IMR-90 (cell line): ENCODE measurements at regions of chr2 and their contacts with region 1.

Region 1: DNA sequence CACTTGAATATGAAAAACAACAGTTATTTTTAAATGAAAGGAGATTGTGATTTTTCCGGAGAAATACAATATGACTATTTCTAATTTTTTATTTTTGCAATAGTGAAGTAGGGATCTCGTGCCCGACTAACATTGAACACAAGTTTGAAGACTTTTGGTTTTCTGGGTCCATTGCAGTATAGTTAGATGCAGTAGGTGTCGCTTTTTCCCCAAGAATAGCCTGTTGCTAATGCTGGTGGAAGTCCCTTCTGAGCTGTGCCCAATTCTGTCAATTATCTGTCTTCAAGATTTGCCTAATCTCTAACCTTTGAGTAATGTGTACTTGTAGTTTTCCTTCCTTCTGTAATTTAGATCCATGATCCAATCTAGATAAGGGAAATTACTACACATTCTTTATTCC is 36.5 kb downstream of the SEMA4F start:
- DNase-seq: peak; percentile 71
- ATAC-seq: peak; percentile 93
- H3K4me3 ChIP-seq: no peak overlapping the region
- H3K27ac ChIP-seq: no peak overlapping the region
- H3K4me1 ChIP-seq: peaks cover 9% of the 10 kb centered on the region; the same call in 1 of the 2 replicates
- H3K27me3 ChIP-seq: peaks cover 4% of the 10 kb centered on the region; the same call in 1 of the 2 replicates
- CTCF ChIP-seq: peak; percentile 91
- POLR2A ChIP-seq: no peak
- RAD21 ChIP-seq: peak; percentile 98

Region 2: GRCh38 chr2:74876081-74876886 is 185.7 kb after region 1 on chr2:
- CTCF ChIA-PET with region 1: interaction called, 9 read pairs
- POLR2A ChIA-PET with region 1: no interaction called
- dilution Hi-C with region 1: no loop called
- in situ Hi-C with region 1: no loop called
- intact Hi-C with region 1: loop called (anchors 1 kb)
- DNase-seq: peak; percentile 46
- ATAC-seq: peak; percentile 78
- H3K4me3 ChIP-seq: no peak overlapping the region
- H3K27ac ChIP-seq: peak overlapping the region; percentile 19; the same call in 1 of the 2 replicates
- H3K4me1 ChIP-seq: peaks cover 16% of the 10 kb centered on the region
- H3K27me3 ChIP-seq: no peaks in the 10 kb centered on the region
- CTCF ChIP-seq: peak; percentile 73
- POLR2A ChIP-seq: no peak
- RAD21 ChIP-seq: peak; percentile 73

Region 3: DNA sequence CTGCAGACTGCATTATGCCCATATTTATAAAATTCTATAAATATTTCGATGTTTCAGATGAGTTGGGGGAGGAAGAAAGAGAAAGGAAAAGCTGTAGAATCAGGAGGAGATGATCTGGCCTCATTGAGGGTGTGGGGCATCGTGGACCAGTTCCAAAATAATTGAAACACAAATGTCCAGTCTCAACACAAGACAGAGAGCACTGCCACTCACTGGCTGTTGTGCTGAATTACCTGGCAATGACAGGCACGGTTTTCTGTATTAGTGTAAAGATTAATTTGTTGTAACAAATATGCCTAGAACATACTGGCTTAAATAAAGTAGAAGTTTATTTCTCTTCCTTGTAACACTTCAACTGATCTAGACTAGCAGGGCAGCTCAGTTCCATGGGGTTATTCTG is 292.0 kb after region 1 on chr2:
- CTCF ChIA-PET with region 1: no interaction called
- POLR2A ChIA-PET with region 1: no interaction called
- dilution Hi-C with region 1: no loop called
- in situ Hi-C with region 1: no loop called
- intact Hi-C with region 1: no loop called
- DNase-seq: no peak
- ATAC-seq: no peak
- H3K4me3 ChIP-seq: no peak overlapping the region
- H3K27ac ChIP-seq: no peak overlapping the region
- H3K4me1 ChIP-seq: no peaks in the 10 kb centered on the region
- H3K27me3 ChIP-seq: no peaks in the 10 kb centered on the region
- CTCF ChIP-seq: 0 out of 2 replicates have a peak, but pooled peaks have one; percentile 19
- POLR2A ChIP-seq: no peak
- RAD21 ChIP-seq: peak; percentile 11; the same call in 1 of the 2 replicates

Region 4: GRCh38 chr2:75290600-75291150 is 600.1 kb after region 1 on chr2:
- CTCF ChIA-PET with region 1: no interaction called
- POLR2A ChIA-PET with region 1: no interaction called
- dilution Hi-C with region 1: no loop called
- in situ Hi-C with region 1: no loop called
- intact Hi-C with region 1: loop called (anchors 2 kb)
- DNase-seq: peak; percentile 45
- ATAC-seq: peak; percentile 79
- H3K4me3 ChIP-seq: no peak overlapping the region
- H3K27ac ChIP-seq: no peak overlapping the region
- H3K4me1 ChIP-seq: peaks cover 8% of the 10 kb centered on the region; the same call in 1 of the 2 replicates
- H3K27me3 ChIP-seq: no peaks in the 10 kb centered on the region
- CTCF ChIP-seq: peak; percentile 51
- POLR2A ChIP-seq: no peak
- RAD21 ChIP-seq: peak; percentile 54

Region 5: DNA sequence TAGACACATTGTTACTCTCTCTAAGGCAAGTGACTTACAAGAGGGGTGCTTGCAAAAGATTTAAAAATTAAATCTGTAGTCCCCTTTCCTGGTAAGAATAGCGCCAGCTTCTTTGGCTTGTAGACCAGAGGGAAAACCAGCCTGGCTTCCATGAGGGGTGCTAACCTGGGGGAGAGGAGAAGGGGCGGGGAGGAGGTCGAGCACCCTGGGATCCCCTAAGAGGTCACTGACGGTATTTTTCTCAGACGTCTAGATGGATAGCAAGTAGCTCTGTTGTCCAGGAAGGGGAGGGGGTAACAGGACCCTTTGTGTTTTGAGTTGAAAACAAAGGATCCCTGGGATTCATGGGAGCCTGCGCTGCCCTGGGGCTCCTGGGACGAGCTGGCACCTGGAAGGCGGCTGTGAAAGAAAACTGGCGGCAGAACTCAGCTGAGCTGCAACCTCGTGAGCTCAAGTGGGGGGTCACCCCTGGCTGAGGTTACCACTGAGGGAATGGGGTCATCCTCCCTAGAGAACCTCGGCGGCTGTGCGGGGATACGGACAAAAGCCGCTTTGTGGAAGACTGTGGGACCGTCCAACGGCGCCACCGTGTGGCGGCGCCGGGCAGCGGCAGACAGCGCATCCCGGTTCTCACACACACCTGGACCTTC is 918.2 kb after region 1 on chr2:
- CTCF ChIA-PET with region 1: no interaction called
- POLR2A ChIA-PET with region 1: no interaction called
- dilution Hi-C with region 1: no loop called
- in situ Hi-C with region 1: loop called (anchors 25 kb)
- intact Hi-C with region 1: no loop called
- DNase-seq: peak; percentile 47
- ATAC-seq: peak; percentile 67
- H3K4me3 ChIP-seq: peak overlapping the region; percentile 22; the same call in 1 of the 2 replicates
- H3K27ac ChIP-seq: no peak overlapping the region
- H3K4me1 ChIP-seq: peaks cover 13% of the 10 kb centered on the region
- H3K27me3 ChIP-seq: peaks cover 24% of the 10 kb centered on the region
- CTCF ChIP-seq: peak; percentile 89
- POLR2A ChIP-seq: peak; percentile 34; the same call in 1 of the 2 replicates
- RAD21 ChIP-seq: peak; percentile 95